AG04450 (cell line): ENCODE measurements at regions of chr7 and their contacts with region 1.

Region 1: DNA sequence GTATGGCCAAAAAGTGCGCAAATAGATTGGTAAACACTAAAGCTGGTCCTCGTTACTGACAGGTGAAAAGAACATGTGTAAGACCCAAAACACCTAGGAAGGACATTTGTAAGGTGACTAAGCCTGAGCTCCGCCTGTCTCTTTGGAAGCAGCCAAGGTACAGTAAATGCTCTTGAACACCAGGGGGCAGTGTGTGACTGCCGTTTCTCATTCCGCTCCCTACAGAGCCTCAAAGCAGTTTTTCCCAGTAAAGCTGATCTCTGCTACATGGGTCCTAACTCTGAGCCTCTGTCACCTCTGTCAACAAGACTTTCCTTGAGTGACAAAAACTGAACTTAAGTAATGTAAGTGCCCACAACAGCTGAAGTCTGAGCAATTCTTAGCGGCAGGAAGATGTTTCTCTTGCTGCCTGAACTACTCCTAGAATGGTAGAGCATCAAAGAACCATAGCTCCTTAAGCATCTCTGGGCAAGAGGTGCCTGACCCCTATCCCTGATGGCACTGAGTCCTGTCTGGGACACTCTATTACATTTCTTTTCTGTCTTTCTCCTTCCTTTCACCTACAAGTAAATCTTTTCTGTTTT is 238.0 kb upstream of the INHBA start:
- DNase-seq: no peak
- H3K4me3 ChIP-seq: no peak overlapping the region
- H3K27ac ChIP-seq: no peak overlapping the region
- H3K27me3 ChIP-seq: no peaks in the 10 kb centered on the region
- CTCF ChIP-seq: peak; percentile 95

Region 2: GRCh38 chr7:41705109-41705901 is 235.5 kb before region 1 on chr7:
- CTCF ChIA-PET with region 1: interaction called, 15 read pairs
- POLR2A ChIA-PET with region 1: interaction called, 4 read pairs
- DNase-seq: peak; percentile 88
- H3K4me3 ChIP-seq: peak overlapping the region; percentile 68
- H3K27ac ChIP-seq: peak overlapping the region; percentile 91
- H3K27me3 ChIP-seq: no peaks in the 10 kb centered on the region
- CTCF ChIP-seq: peak; percentile 89

Region 3: DNA sequence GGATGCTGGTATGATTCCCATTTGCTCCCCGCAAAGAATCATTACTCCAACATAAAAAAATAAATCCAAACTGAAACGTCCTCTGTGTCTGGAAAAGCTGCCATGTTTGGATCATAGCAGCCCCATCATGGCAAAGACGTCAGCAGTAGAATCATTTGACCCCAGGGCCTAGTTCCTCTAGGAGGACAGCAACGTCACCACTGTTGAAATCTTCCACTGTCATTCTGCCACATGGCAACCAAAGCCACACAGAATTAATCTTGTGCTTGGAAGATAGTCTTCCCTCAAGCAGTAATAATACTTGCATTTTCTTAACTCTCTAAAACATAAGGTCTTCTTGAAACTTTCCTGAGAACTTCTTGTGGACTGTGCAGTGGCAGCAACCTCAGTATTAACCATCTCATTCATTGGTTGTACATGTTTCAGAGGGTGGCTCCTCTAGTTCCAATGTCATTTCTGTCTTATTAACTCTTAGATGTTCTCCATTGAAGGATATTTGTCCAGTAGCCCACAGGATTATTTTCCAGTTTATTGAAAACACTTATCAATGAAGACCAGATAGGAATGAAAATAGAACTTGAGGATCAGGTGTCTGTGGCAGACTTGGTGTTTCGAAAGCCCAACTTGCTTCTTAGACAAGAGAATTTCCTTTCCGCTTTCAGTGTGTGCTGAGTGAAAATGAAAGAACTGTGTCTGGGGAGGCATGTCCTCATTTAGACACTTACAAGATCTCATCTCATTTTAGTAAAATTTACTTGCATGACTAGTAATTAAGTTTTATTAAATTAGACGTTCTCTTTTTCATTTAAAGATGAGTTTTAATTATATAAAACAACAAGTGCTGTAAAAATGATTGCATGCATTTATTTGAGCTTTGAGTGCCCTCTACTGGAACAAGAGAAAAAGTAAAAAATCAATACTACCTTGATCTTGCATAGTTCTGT is 209.1 kb before region 1 on chr7:
- CTCF ChIA-PET with region 1: no interaction called
- POLR2A ChIA-PET with region 1: no interaction called
- DNase-seq: no peak
- H3K4me3 ChIP-seq: no peak overlapping the region
- H3K27ac ChIP-seq: no peak overlapping the region
- H3K27me3 ChIP-seq: no peaks in the 10 kb centered on the region
- CTCF ChIP-seq: peak; percentile 36

Region 4: GRCh38 chr7:41921453-41921981 is 19.3 kb before region 1 on chr7:
- CTCF ChIA-PET with region 1: interaction called, 15 read pairs
- POLR2A ChIA-PET with region 1: no interaction called
- DNase-seq: no peak
- H3K4me3 ChIP-seq: no peak overlapping the region
- H3K27ac ChIP-seq: no peak overlapping the region
- H3K27me3 ChIP-seq: no peaks in the 10 kb centered on the region
- CTCF ChIP-seq: no peak

Region 5: DNA sequence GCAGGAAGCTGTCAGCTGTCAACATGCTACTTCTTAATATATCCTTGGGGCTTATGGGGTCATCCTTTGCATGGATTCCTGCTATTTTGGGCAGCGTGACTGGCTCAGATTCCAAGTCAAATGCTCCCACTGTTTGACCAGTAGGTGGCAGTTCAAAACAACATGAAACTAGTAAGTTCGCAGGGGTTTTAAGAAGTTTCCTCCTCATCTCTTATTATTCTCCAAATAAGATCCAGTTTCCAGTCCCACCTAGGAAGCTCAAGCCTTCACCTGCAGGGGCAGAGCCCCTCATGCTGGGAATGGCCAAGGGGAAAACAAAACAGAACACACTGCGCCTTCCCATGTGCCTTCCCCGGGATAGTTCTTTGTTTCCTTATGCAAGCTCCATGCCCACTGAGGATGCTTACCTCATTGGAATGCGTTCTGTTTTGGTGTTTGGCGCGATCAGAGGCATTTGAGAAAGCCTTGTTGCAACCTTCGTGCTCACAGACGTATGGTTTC is 36.3 kb after region 1 on chr7:
- CTCF ChIA-PET with region 1: interaction called, 118 read pairs
- POLR2A ChIA-PET with region 1: no interaction called
- DNase-seq: no peak
- H3K4me3 ChIP-seq: no peak overlapping the region
- H3K27ac ChIP-seq: no peak overlapping the region
- H3K27me3 ChIP-seq: no peaks in the 10 kb centered on the region
- CTCF ChIP-seq: peak; percentile 84

Region 6: GRCh38 chr7:42247301-42247700 is 306.4 kb after region 1 on chr7:
- CTCF ChIA-PET with region 1: interaction called, 12 read pairs
- POLR2A ChIA-PET with region 1: no interaction called
- DNase-seq: no peak
- H3K4me3 ChIP-seq: no peak overlapping the region
- H3K27ac ChIP-seq: no peak overlapping the region
- H3K27me3 ChIP-seq: peaks cover 2% of the 10 kb centered on the region
- CTCF ChIP-seq: peak; percentile 32

Region 7: DNA sequence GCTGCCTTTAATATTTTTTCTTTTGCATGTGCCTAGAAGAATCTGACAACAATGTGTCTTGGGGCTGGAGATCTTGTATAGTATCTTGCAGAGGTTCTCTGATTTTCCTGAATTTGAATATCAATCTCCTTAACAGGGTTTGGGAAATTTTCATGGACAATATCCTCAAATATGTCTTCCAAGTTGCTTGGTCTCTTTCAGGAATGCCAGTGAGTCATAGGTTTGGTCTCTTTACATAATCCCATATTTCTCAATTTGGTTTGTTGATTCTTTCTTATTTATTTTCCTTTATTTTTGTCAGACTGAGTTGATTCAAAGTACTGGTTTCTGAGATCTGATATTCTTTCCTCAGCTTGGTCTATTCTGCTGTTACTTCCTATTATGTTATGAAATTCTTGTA is 504.8 kb after region 1 on chr7:
- CTCF ChIA-PET with region 1: no interaction called
- POLR2A ChIA-PET with region 1: no interaction called
- DNase-seq: no peak
- H3K4me3 ChIP-seq: no peak overlapping the region
- H3K27ac ChIP-seq: no peak overlapping the region
- H3K27me3 ChIP-seq: no peaks in the 10 kb centered on the region
- CTCF ChIP-seq: no peak

Region 8: DNA sequence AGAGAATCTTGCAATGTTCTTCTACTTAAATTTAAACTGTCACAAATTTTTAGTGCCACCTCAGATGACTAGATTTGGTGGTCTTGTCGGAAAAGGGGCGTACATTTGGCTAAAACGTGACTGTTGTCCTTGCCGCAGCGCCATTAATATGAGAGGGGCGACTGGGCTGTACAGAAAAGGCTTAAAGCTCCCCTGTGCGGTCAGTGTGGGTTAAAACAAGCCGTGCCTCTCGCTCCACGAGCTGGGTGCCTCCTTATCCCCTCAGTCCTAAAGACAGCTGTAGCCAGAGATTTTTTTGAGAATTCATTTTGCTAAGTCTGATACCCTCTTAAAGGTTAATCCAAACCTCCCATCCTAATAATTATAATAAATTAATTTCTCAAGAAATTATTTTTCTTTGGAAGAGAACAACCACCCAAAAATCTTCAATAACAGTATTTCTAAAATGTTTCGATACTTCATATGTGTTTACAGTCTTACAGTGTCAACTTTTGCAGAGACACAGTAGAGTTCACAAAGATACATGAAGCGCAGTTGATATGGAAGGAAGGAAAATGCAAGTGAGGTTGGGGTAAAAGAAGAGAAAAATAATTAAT is 902.5 kb after region 1 on chr7:
- CTCF ChIA-PET with region 1: interaction called, 21 read pairs
- POLR2A ChIA-PET with region 1: no interaction called
- DNase-seq: no peak
- H3K4me3 ChIP-seq: no peak overlapping the region; the same call in 1 of the 2 replicates
- H3K27ac ChIP-seq: no peak overlapping the region
- H3K27me3 ChIP-seq: peaks cover 17% of the 10 kb centered on the region
- CTCF ChIP-seq: peak; percentile 59

Region 9: GRCh38 chr7:42931834-42932651 is 991.2 kb after region 1 on chr7 and contains the starts of genes MRPL32 and PSMA2:
- CTCF ChIA-PET with region 1: interaction called, 12 read pairs
- POLR2A ChIA-PET with region 1: no interaction called
- DNase-seq: peak; percentile 93
- H3K4me3 ChIP-seq: peak within 1 kb of the TSS; percentile 93
- H3K27ac ChIP-seq: peak within 1 kb of the TSS; percentile 76
- H3K27me3 ChIP-seq: no peaks in the 10 kb centered on the region
- CTCF ChIP-seq: no peak
- polyA plus RNA-seq, gene MRPL32: 51.6 and 68.5 TPM in 2 replicates
- polyA plus RNA-seq, gene PSMA2: 142 and 233 TPM in 2 replicates